ENCODE measurements at regions of chr18 and their contacts with region 1.

Region 1: DNA sequence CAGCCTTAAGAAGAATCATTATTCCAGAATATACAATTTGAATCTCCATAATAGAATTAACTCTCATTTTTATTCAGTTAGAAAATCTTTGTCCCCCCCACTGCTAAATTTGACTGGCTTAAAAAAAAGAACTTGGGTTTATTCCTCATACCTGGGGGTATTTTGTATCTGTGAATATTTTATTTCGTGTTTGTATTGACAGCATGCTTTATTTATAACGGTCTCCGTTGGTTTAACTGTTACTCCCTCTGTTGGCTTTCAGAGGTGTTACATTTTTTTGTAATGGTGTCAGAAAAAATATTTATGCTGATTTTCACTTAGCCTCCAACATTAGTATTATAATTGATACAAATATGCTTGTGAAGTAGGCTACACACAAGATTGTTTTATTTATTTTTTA is 109.1 kb downstream of the HAUS1 start:
- DNase-seq: peak; percentile 39 to 58 (median 55)
- H3K4me3 ChIP-seq: peak overlapping the region in 1 of 7 experiments; percentile 26
- H3K27ac ChIP-seq: no peak overlapping the region
- H3K4me1 ChIP-seq: peaks cover 7 to 27% (median 20%) of the 10 kb centered on the region in 4 experiments
- H3K27me3 ChIP-seq: no peaks in the 10 kb centered on the region

Region 2: DNA sequence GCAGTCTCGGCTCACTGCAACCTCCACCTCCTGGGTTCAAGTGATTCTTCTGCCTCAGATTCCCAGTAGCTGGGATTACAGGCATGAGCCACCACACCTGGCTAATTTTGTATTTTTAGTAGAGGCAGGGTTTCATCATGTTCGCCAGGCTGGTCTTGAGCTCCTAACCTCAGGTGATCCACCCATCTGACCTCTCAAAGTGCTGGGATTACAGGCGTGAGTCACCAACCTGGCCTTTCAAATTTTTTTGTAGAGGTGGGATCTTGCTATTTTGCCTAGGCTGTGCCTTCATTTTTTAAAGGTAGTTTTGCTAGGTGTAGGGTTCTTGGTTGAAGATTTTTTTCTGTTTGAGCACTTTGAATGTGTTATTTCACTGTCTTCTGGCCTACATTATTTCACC is 102.9 kb before region 1 on chr18:
- CTCF ChIA-PET with region 1: no interaction called
- POLR2A ChIA-PET with region 1: no interaction called
- DNase-seq: no peak
- H3K4me3 ChIP-seq: no peak overlapping the region
- H3K27ac ChIP-seq: no peak overlapping the region
- H3K4me1 ChIP-seq: no peaks in the 10 kb centered on the region
- H3K27me3 ChIP-seq: no peaks in the 10 kb centered on the region

Region 3: DNA sequence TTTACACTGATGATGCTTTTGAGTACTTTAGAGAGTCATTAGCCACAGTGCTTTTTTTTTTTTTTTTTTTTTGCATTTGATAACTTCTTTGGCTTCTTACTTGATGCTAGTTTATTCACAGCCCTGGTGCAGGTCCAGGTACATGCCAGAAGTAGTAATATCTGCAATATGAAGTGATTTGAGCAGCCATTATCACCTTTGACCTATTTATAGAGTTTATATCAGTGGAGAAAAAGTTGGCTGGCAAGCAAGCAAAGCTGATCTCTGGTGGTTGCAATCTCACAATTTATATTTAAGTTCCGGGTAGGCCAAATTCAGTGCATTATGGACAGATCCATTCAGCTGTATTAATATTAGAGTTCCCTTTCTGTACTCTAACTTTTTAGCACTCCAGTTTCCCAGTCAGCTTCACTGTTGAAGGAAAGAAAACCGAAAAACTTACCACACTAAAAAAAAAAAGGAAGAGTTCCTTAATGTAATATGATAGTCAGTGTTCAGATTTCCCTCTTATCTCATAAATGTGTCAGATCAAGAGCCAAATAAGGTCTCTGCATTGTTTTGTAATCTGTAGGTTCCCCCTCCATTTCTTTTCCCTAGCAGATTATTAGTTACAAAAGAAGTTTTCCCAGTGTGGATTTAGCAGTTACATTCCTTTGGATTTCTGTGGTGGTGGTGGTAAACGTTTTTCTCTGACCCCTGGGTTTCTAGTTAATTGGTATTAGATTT is 30.5 kb before region 1 on chr18:
- CTCF ChIA-PET with region 1: interaction called, 138 read pairs
- POLR2A ChIA-PET with region 1: no interaction called
- DNase-seq: no peak
- H3K4me3 ChIP-seq: no peak overlapping the region
- H3K27ac ChIP-seq: peak overlapping the region in 1 of 2 experiments; percentile 22
- H3K4me1 ChIP-seq: peaks cover 10 to 32% (median 20%) of the 10 kb centered on the region in 4 experiments
- H3K27me3 ChIP-seq: no peaks in the 10 kb centered on the region

Measured in common myeloid progenitor, CD34-positive (primary cell).